Activated CD8-positive, alpha-beta T cell treated with anti-CD3 and anti-CD28 coated beads for 36 hours (primary cell): ENCODE measurements at regions of chr12 and their contacts with region 1.

Region 1: DNA sequence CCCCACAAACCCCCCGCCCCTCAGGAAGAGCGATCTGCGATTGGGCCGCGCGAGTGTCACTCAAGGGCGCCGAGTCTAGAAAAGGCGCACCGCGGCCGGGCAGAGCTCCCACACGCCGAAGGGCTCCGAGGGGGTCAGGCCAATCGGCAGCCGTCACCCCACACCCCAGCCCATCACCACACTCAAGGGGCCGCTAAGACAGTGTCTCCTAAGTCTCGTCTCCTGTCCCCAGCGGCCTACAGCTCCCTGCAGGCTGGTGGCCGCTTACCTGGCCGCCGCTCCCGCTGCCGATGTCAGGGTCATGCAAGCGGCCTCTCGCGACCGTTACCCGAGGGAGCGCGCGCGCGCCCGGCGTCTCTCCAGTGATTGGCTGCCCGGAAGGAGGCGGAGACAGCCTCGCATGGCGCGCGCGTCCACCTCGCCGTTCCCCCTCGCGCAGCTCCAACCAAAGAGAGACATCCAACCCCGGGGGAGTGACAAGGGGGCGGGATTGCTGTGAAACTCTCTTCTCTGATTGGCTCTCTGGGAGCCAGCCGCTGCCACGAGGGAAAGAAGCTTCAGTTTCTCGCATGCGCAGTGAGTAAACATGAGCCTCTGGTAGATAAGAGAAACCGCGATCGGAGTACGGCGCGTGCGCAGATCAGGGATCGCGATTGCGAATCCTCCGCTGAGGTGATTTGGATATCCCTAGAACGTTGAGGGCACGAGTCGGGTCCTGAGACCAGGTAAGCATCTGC is at the starts of genes MPHOSPH9 and MTRFR:
- DNase-seq: peak; percentile 99
- ATAC-seq: peak; percentile 93
- H3K4me3 Mint-ChIP-seq: peak within 1 kb of the TSS; percentile 96
- H3K27ac Mint-ChIP-seq: peak within 1 kb of the TSS; percentile 99
- H3K4me1 Mint-ChIP-seq: peaks cover 48% of the 10 kb centered on the region
- H3K27me3 Mint-ChIP-seq: no peaks in the 10 kb centered on the region
- CTCF ChIP-seq: no peak
- total RNA-seq, gene MPHOSPH9: 96.9 to 101 TPM
- total RNA-seq, gene MTRFR: 28.1 to 31.0 TPM

Region 2: GRCh38 chr12:122974274-122974891 is 258.6 kb before region 1 on chr12:
- CTCF ChIA-PET with region 1: interaction called, 12 read pairs
- POLR2A ChIA-PET with region 1: interaction called, 10 read pairs
- intact Hi-C with region 1: loop called (anchors 10 kb)
- DNase-seq: peak; percentile 99
- ATAC-seq: peak; percentile 85
- H3K4me3 Mint-ChIP-seq: peak overlapping the region; percentile 95
- H3K27ac Mint-ChIP-seq: peak overlapping the region; percentile 100
- H3K4me1 Mint-ChIP-seq: peaks cover 26% of the 10 kb centered on the region
- H3K27me3 Mint-ChIP-seq: no peaks in the 10 kb centered on the region
- CTCF ChIP-seq: no peak

Region 3: GRCh38 chr12:123075646-123076171 is 157.3 kb before region 1 on chr12:
- CTCF ChIA-PET with region 1: interaction called, 10 read pairs
- POLR2A ChIA-PET with region 1: interaction called, 16 read pairs
- intact Hi-C with region 1: loop called (anchors 10 kb)
- DNase-seq: peak; percentile 91
- ATAC-seq: peak; percentile 79
- H3K4me3 Mint-ChIP-seq: peak overlapping the region; percentile 77
- H3K27ac Mint-ChIP-seq: peak overlapping the region; percentile 93
- H3K4me1 Mint-ChIP-seq: peaks cover 66% of the 10 kb centered on the region
- H3K27me3 Mint-ChIP-seq: no peaks in the 10 kb centered on the region
- CTCF ChIP-seq: no peak

Region 4: GRCh38 chr12:123250484-123251383 is 17.8 kb after region 1 on chr12:
- CTCF ChIA-PET with region 1: interaction called, 40 read pairs
- POLR2A ChIA-PET with region 1: interaction called, 13 read pairs
- intact Hi-C with region 1: no loop called
- DNase-seq: no peak
- ATAC-seq: no peak
- H3K4me3 Mint-ChIP-seq: no peak overlapping the region
- H3K27ac Mint-ChIP-seq: peak overlapping the region; percentile 49
- H3K4me1 Mint-ChIP-seq: peaks cover 58% of the 10 kb centered on the region
- H3K27me3 Mint-ChIP-seq: no peaks in the 10 kb centered on the region
- CTCF ChIP-seq: no peak

Region 5: DNA sequence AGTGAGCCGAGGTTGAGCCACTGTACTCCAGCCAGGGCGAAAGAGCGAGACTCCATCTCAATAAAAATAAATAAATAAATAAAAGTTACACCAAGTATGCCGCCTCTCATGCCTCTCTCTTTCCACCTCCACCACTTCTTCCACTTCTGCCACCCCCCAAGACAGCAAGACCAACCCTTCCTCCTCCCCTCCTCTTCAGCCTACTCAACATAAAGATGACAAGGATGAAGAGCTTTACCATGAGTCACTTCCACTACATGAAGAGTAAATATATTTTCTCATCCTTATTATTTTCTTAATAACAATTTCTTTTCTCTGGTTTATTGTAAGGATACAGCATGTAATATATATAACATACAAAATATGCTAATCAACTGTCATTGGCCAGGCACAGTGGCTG is 347.8 kb after region 1 on chr12:
- CTCF ChIA-PET with region 1: interaction called, 10 read pairs
- POLR2A ChIA-PET with region 1: no interaction called
- intact Hi-C with region 1: no loop called
- DNase-seq: no peak
- ATAC-seq: no peak
- H3K4me3 Mint-ChIP-seq: no peak overlapping the region
- H3K27ac Mint-ChIP-seq: no peak overlapping the region
- H3K4me1 Mint-ChIP-seq: peaks cover 18% of the 10 kb centered on the region
- H3K27me3 Mint-ChIP-seq: no peaks in the 10 kb centered on the region
- CTCF ChIP-seq: no peak